SK-N-SH (cell line): ENCODE measurements at regions of chr12 and their contacts with region 1.

Region 1: DNA sequence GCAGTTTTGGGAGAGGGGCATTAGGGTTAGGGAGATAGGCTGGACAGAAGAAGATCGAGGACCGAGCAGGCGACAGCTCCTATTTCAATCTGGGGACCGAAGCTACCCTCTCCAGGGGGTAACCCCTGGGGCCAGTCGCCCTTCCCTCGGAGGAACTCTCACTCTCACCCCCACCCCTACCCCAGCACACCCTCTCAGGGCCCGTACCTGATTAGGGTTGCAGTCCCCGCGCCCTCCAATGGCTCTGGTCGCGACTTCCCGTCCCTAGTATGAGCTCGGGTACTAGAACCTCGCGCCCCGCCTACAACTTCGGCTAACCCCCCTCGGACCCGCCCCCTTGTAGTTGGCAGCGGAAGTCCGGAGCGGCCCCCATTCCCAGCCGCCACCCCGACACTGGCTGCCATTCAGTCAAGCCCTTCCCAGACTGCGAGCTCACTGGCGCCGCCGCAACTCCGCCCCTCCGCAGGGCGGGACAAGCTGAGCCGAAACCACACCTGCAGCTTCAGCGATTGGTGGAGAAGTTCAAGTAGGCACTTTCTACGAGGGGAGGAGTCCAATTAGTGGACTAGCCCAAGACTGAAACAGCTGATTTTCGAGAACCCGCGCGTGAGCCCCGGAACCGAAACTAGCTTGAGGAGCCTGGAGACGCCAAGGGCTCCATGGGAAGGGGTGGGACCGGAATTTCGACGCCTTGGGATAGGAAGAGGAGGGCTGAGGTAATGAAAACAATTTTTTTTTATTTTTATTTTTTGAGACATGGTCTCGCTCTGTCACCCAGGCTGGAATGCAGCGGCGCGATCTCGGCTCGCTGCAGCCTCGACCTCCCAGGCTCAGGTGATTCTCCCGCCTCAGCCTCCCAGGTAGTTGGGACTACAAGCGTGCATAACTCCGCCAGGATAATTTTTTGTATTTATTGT is at the start of gene STAT2:
- DNase-seq: peak; percentile 93
- H3K4me3 ChIP-seq: peak within 1 kb of the TSS; percentile 81 to 82
- H3K27ac ChIP-seq: peak within 1 kb of the TSS; percentile 79 to 80
- H3K4me1 ChIP-seq: peaks cover 0 to 9% of the 10 kb centered on the region in 2 experiments; a peak in 1 of 4 replicates
- H3K27me3 ChIP-seq: no peaks in the 10 kb centered on the region
- CTCF ChIP-seq: no peak
- EP300 ChIP-seq: peak; percentile 3 to 60; a peak in 3 of 4 replicates
- RAD21 ChIP-seq: no peak
- polyA plus RNA-seq, gene STAT2: 58.1 and 91.4 TPM in 2 replicates

Region 2: DNA sequence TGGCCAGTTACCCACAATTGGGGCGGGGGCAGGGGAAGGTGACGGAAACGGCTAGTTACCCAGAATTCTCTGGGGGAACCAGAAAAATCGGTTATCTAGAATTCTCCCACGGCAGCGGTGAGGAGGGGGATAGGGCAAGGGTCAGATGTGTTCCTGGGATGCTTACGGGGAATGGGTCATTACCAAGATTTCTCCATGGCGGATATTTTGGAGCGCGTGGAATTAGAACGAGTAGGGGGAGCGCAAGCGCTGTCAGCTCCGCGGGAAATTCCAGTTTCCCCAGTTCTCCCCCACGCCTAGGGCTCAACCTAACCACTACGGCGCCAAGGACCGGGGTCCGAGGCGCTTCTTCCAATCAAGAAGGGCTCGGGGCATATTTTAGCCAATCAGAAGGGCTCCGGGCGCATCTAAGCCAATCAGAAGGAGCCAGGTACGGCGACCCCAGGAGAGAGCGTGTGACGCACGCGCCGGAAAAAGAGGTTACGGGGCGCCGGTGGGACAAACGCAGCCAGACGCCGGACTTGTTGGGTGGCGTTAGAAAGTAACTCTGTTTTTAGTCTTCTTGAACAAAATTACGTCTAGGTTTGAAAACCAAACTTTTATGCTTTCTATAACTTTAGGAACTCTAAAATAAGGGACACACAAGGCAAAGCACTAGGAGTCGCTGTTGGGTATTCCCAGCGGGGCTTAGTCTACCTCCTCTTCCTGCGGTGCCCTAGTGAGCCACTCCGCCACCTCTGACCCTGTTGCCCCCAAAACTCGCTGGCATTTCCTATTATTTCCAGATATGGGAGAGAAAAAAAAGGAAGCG is 26.2 kb before region 1 on chr12 and contains the start of gene PAN2:
- CTCF ChIA-PET with region 1: interaction called, 3 read pairs
- POLR2A ChIA-PET with region 1: interaction called, 26 read pairs
- DNase-seq: peak; percentile 93
- H3K4me3 ChIP-seq: peak within 1 kb of the TSS; percentile 61 to 73
- H3K27ac ChIP-seq: peak within 1 kb of the TSS; percentile 84 to 97
- H3K4me1 ChIP-seq: peaks cover 4 to 8% of the 10 kb centered on the region in 2 experiments; a peak in 1 of 4 replicates
- H3K27me3 ChIP-seq: no peaks in the 10 kb centered on the region
- CTCF ChIP-seq: peak; percentile 80
- EP300 ChIP-seq: no peak
- RAD21 ChIP-seq: no peak
- polyA plus RNA-seq, gene PAN2: 37.1 and 66.9 TPM in 2 replicates

Region 3: DNA sequence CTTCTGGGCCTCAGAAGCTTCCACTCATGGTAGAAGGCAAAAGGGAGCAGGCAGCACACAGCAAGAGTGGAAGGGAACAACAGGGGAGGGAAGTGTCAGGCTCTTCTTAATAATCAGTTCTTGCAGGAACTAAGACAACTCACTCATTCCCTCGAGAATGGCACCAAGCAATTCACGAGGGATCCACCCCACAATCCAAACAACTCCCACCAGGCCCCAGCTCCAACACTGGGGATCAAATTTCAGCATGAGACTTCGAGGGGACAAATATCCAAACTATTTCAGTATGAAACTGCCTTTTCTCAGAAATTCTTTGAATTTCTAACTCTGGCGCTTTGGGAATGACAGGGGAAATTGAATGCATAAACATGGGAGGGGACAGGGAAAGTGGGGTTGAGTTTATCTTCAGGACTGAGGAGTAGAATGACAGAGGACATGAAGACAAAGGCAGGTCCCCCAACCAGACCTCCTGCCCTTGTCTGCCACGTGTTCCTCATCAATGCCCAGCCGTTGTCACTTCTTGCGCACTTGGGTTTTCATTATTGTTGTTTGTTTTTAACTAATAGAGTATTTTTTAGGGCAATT is 27.1 kb after region 1 on chr12:
- CTCF ChIA-PET with region 1: no interaction called
- POLR2A ChIA-PET with region 1: no interaction called
- DNase-seq: no peak
- H3K4me3 ChIP-seq: no peak overlapping the region
- H3K27ac ChIP-seq: no peak overlapping the region
- H3K4me1 ChIP-seq: no peaks in the 10 kb centered on the region
- H3K27me3 ChIP-seq: no peaks in the 10 kb centered on the region
- CTCF ChIP-seq: no peak
- EP300 ChIP-seq: no peak
- RAD21 ChIP-seq: no peak

Region 4: GRCh38 chr12:56457817-56458216 is 97.7 kb after region 1 on chr12:
- CTCF ChIA-PET with region 1: no interaction called
- POLR2A ChIA-PET with region 1: no interaction called
- DNase-seq: no peak
- H3K4me3 ChIP-seq: no peak overlapping the region
- H3K27ac ChIP-seq: no peak overlapping the region
- H3K4me1 ChIP-seq: no peaks in the 10 kb centered on the region; a peak in 1 of 4 replicates
- H3K27me3 ChIP-seq: no peaks in the 10 kb centered on the region
- CTCF ChIP-seq: no peak
- EP300 ChIP-seq: no peak
- RAD21 ChIP-seq: no peak